ENCODE measurements at regions of chr9 and their contacts with region 1.

Region 1: GRCh38 chr9:73104342-73104741 is 47.3 kb upstream of the ANXA1 start:
- DNase-seq: no peak
- H3K4me3 ChIP-seq: no peak overlapping the region
- H3K27me3 ChIP-seq: no peaks in the 10 kb centered on the region
- CTCF ChIP-seq: no peak

Region 2: GRCh38 chr9:73093740-73094379 is 10.5 kb before region 1 on chr9:
- CTCF ChIA-PET with region 1: interaction called, 19 read pairs
- POLR2A ChIA-PET with region 1: no interaction called
- DNase-seq: no peak
- H3K4me3 ChIP-seq: no peak overlapping the region
- H3K27me3 ChIP-seq: no peaks in the 10 kb centered on the region
- CTCF ChIP-seq: no peak

Region 3: GRCh38 chr9:73151653-73152542 is 47.6 kb after region 1 on chr9 and contains the start of gene ANXA1:
- CTCF ChIA-PET with region 1: interaction called, 13 read pairs
- POLR2A ChIA-PET with region 1: no interaction called
- DNase-seq: peak; percentile 78
- H3K4me3 ChIP-seq: peak within 1 kb of the TSS; percentile 52
- H3K27me3 ChIP-seq: no peaks in the 10 kb centered on the region
- CTCF ChIP-seq: no peak
- polyA plus RNA-seq, gene ANXA1: 581 and 1,031 TPM in 2 replicates

Region 4: GRCh38 chr9:73173557-73174329 is 69.4 kb after region 1 on chr9:
- CTCF ChIA-PET with region 1: interaction called, 63 read pairs
- POLR2A ChIA-PET with region 1: no interaction called
- DNase-seq: no peak
- H3K4me3 ChIP-seq: no peak overlapping the region
- H3K27me3 ChIP-seq: no peaks in the 10 kb centered on the region
- CTCF ChIP-seq: no peak

Region 5: GRCh38 chr9:73183917-73184861 is 79.8 kb after region 1 on chr9:
- CTCF ChIA-PET with region 1: interaction called, 63 read pairs
- POLR2A ChIA-PET with region 1: no interaction called
- DNase-seq: no peak
- H3K4me3 ChIP-seq: no peak overlapping the region
- H3K27me3 ChIP-seq: no peaks in the 10 kb centered on the region
- CTCF ChIP-seq: peak; percentile 31

Measured in BJ (cell line).